ENCODE measurements at regions of chr1 and their contacts with region 1.

Region 1: GRCh38 chr1:215556996-215557395 is 10.1 kb upstream of the KCTD3 start:
- DNase-seq: no peak
- ATAC-seq: peak; percentile 42; the same call in 1 of the 2 replicates
- H3K4me3 ChIP-seq: no peak overlapping the region
- H3K27ac ChIP-seq: no peak overlapping the region
- H3K4me1 ChIP-seq: no peaks in the 10 kb centered on the region
- H3K27me3 ChIP-seq: no peaks in the 10 kb centered on the region; the same call in 1 of the 2 replicates
- CTCF ChIP-seq: no peak

Region 2: DNA sequence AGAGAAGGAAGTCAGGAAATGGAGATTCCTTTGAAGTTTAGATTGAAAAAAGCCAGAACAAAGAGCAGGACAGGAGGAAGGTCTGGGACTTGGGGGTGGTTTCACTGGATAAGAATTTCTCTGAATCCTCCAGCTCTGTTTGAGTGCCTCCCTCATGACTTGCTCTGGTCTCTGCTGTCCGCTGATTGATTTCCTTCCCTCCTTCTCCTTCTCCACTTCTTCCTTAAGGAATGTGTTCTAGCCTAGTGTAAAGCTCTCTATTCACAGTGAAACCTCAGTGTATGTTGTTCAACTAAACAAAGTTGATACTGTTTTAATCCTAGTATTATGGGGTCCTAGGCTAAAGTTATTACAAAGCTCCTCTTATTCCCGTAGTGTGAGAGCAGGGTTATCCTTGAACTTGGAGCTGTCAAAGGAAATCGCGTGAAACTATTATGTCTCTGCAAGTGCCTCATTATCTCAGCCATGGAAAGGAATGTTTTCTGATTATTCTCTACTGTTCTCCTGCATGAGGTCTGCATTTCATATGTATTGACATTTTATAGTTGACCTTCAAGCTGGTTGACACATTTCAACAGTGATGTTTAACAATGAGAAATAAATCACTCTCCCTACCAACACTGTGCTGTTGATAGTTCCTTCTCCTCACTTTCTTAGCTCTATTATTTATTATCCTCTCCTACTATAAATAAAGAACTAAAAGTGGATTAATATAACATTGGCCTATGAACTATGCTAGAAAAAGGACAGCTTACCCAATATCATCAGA is 72.6 kb before region 1 on chr1:
- CTCF ChIA-PET with region 1: no interaction called
- POLR2A ChIA-PET with region 1: no interaction called
- in situ Hi-C with region 1: no loop called
- intact Hi-C with region 1: loop called (anchors 2 kb)
- DNase-seq: no peak
- ATAC-seq: no peak
- H3K4me3 ChIP-seq: no peak overlapping the region
- H3K27ac ChIP-seq: no peak overlapping the region
- H3K4me1 ChIP-seq: no peaks in the 10 kb centered on the region
- H3K27me3 ChIP-seq: no peaks in the 10 kb centered on the region; the same call in 1 of the 2 replicates
- CTCF ChIP-seq: no peak

Measured in Panc1 (cell line).